Gastrocnemius medialis (tissue), 4 donors: ENCODE measurements at regions of chr1 and their contacts with region 1.

Region 1: GRCh38 chr1:214261206-214262123 is 19.5 kb upstream of the SMYD2 start:
- DNase-seq: peak; percentile 84 to 91
- ATAC-seq: peak; percentile 89 to 92
- H3K4me3 ChIP-seq: peak overlapping the region; percentile 28 to 52 (median 35)
- H3K27ac ChIP-seq: peak overlapping the region; percentile 79 to 89 (median 86)
- H3K4me1 ChIP-seq: peaks cover 17 to 30% of the 10 kb centered on the region in 2 donors
- H3K27me3 ChIP-seq: no peaks in the 10 kb centered on the region
- CTCF ChIP-seq: peak; percentile 90 to 98 (median 97)
- POLR2A ChIP-seq: no peak

Region 2: DNA sequence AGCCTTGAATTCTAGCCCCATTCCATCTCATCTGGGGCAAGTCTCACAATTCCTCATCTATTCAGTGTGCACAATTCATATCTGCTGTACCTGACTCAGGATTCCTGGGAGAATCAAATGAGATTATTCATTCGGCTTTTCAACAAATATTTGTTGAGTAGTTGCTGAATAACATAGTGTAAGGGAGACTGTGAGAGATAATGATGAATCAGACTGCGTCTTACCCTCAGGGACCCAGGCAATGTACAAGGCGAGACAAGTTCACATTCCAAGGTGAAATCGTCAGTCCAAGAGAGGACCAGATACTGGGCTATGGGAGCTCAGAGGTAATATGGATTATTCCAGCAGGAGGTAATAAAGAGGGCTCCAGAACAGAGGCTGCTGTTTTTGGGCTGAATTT is 48.3 kb before region 1 on chr1:
- in situ Hi-C with region 1: no loop called
- intact Hi-C with region 1: loop called (anchors 2 kb)
- DNase-seq: no peak
- ATAC-seq: no peak
- H3K4me3 ChIP-seq: no peak overlapping the region
- H3K27ac ChIP-seq: no peak overlapping the region
- H3K4me1 ChIP-seq: peaks cover 8 to 13% of the 10 kb centered on the region in 2 donors
- H3K27me3 ChIP-seq: no peaks in the 10 kb centered on the region
- CTCF ChIP-seq: no peak
- POLR2A ChIP-seq: no peak

Region 3: DNA sequence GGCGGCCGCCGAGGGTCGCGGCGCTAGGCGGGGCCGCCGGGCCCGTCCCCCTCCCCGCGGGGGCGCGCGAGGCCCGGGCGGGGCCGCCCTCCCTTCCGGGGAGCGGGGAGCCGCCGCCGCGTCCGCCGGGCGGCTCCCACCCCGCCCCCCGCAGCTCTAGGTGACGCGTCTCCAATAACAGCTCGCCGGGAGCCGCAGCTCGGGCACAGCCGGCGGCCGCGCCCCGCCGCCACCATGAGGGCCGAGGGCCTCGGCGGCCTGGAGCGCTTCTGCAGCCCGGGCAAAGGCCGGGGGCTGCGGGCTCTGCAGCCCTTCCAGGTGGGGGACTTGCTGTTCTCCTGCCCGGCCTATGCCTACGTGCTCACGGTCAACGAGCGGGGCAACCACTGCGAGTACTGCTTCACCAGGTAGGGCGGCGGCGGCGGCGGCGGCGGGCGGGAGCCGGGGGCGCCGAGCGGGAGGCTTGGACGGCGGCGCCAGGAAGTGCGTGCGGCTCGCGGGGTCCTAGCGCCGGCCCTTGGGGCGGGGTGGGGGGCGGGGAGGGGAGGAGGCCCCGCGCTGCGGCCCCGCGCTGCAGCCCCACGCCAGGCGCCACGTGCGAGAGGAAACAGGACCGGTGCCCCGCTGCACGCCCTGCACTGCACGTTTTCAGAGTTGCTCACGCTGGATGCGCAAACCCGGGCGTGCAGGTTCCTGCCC is 19.7 kb after region 1 on chr1 and contains the start of gene SMYD2:
- in situ Hi-C with region 1: no loop called
- intact Hi-C with region 1: loop called (anchors 1 kb)
- DNase-seq: peak; percentile 59 to 69
- ATAC-seq: peak; percentile 83 to 87
- H3K4me3 ChIP-seq: peak within 1 kb of the TSS; percentile 71 to 94 (median 83)
- H3K27ac ChIP-seq: peak within 1 kb of the TSS; percentile 90 to 98 (median 94)
- H3K4me1 ChIP-seq: peaks cover 15 to 19% of the 10 kb centered on the region in 2 donors
- H3K27me3 ChIP-seq: no peaks in the 10 kb centered on the region
- CTCF ChIP-seq: no peak
- POLR2A ChIP-seq: peak; percentile 90 to 96
- total RNA-seq, gene SMYD2: 57.2 to 112 (median 80.4) TPM

Region 4: DNA sequence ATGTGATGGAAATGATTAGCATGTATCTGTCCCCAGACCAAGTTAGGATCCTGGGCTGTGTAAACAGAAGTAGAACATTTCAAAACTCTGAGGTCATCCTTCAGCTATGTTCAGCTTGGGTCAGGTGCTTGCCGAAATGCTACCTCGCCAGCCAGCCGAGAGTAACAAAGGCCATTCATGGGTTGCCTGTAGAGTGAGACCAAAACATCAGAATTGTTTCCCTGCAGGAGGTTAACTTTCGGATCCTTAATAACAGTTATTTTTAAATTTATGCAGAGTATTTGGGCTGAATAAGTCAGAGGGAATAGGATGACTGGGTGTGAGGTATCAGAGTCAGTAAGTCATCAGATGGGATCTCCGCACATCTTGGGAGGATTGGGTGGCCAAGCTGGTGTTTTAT is 55.1 kb after region 1 on chr1:
- in situ Hi-C with region 1: loop called in 1 of 4 experiments (anchors 5 kb)
- intact Hi-C with region 1: loop called (anchors 1 kb)
- DNase-seq: peak; percentile 45 to 72
- ATAC-seq: peak; percentile 89 to 93
- H3K4me3 ChIP-seq: no peak overlapping the region
- H3K27ac ChIP-seq: peak overlapping the region; percentile 44 to 84 (median 72)
- H3K4me1 ChIP-seq: peaks cover 40 to 48% of the 10 kb centered on the region in 2 donors
- H3K27me3 ChIP-seq: no peaks in the 10 kb centered on the region
- CTCF ChIP-seq: no peak
- POLR2A ChIP-seq: no peak

Region 5: DNA sequence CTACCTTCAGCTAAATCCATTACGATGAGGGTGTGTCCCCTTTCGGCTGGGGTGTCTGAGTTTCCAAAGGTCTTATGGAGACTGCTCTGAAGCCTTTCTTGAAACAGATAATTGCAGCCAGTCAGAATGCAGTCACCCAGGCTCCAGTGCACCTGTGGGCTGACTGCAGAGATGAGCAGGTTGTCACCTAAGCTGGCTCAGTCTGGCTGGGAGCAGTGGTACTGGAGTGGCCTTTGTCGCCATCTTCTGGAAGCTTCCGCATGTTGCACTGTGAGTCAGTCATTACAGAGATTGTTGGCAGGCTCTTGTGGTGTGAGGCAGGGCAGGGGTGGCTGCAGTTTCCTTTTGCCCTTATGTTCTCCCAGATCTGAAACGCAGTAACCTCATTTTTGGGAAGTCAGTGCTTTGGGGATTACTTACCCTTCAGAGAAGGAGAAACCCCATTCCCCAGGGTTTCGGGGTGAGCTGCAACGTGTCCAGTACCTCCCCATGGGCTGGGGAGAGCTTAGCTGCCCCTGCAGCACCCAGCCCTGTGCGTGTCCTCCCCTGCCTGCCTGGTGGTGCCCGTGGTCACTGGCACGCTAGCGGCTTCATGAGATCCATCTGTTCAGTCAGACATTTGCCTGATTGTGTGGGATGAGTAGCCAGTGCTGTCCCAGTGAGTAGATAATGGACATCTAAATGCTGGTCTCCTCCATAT is 67.5 kb after region 1 on chr1:
- in situ Hi-C with region 1: loop called (anchors 5 kb)
- intact Hi-C with region 1: loop called (anchors 1 kb)
- DNase-seq: peak; percentile 73 to 82
- ATAC-seq: peak; percentile 93 to 95
- H3K4me3 ChIP-seq: no peak overlapping the region
- H3K27ac ChIP-seq: no peak overlapping the region
- H3K4me1 ChIP-seq: peaks cover 6 to 15% of the 10 kb centered on the region in 2 donors
- H3K27me3 ChIP-seq: no peaks in the 10 kb centered on the region
- CTCF ChIP-seq: peak; percentile 92 to 98 (median 96)
- POLR2A ChIP-seq: no peak